ENCODE measurements at regions of chr5 and their contacts with region 1.

Region 1: DNA sequence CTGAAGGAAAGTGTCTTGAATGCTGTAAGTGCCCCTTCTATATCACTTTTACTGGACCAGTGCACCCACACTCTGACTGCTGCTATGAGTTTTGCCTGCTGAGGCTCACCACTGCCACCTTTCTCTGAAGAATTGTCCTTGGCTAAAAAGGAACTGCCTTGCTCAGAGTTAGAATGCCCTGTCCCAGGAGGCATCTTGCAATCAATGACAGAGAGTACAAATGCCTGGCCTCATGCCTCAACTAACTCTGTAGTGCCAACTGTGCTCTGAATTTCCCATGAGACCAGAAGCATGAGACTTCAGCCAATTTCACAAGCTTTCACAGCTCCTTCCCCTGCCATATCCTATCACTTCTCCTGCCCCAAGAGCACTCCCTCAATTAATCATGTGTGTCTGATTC is 569.7 kb downstream of the ZNF608 start:
- DNase-seq: peak; percentile 25
- H3K4me3 ChIP-seq: no peak overlapping the region
- H3K27ac ChIP-seq: no peak overlapping the region
- H3K4me1 ChIP-seq: no peaks in the 10 kb centered on the region
- CTCF ChIP-seq: peak; percentile 46; the same call in 1 of the 2 replicates

Region 2: DNA sequence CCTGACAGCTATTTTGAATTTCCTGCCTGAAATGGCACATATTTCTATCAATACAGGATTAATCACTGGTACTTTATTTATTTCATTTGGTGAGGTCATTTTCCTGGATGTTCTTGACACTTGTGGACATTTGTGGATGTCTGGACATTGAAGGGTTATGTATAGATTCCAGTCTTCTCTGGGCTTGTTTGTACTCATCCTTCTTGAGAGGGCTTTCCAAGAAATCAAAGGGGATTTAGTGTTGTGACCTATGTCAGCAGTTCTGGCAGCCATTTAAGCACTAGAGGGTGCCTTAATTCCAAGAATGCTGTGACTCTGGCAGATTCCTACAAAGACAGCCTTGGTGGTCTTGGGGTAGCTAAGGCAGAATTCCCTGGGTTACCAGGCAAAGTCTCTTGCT is 405.0 kb before region 1 on chr5:
- CTCF ChIA-PET with region 1: no interaction called
- POLR2A ChIA-PET with region 1: no interaction called
- intact Hi-C with region 1: no loop called
- DNase-seq: no peak
- H3K4me3 ChIP-seq: no peak overlapping the region
- H3K27ac ChIP-seq: no peak overlapping the region
- H3K4me1 ChIP-seq: no peaks in the 10 kb centered on the region
- CTCF ChIP-seq: no peak

Region 3: DNA sequence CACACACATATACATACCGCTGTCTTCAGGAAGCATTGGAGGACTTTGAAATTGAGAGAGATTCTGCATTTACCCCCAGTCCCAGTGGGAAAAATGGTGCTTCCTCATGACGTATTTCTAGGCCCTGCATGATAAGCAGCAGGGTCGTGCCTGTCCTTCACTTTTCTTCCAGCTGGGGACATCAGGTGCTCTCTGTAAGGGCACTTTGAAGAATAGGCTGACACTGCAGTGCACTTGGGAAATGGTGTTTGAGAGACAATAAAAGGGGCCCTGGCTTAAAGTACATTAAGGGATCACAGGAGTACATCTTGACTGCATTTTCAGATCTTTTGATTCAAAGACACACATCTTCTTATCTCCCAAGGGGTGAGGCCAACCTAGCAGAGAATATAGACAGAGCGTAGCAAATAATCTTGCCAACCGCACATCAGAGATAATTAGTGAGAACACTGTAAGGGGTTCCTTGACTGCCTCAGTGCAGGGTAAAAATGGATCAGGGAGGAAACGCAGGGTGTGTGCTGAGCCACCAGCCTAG is 226.8 kb before region 1 on chr5:
- CTCF ChIA-PET with region 1: no interaction called
- POLR2A ChIA-PET with region 1: no interaction called
- intact Hi-C with region 1: loop called (anchors 10 kb)
- DNase-seq: no peak
- H3K4me3 ChIP-seq: no peak overlapping the region
- H3K27ac ChIP-seq: no peak overlapping the region
- H3K4me1 ChIP-seq: no peaks in the 10 kb centered on the region
- CTCF ChIP-seq: no peak

Region 4: DNA sequence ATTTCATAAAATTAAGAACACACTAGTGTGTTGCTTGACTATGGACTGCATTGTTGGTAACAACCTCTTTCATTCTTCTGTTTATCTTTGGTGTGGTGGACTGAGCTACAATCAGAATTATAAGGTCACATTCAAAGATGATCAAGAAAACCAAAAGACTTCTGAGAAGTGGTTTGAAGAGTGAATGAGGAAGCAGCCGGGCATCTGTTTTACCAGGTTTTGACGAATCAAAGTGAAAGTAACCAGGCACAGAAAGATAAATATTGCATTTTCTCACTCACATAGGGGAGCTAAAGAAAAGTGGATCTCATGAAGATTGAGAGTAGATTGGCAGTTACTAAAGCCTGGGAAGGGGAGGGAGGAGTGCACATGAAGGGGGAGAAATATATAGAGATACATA is 19.4 kb before region 1 on chr5:
- CTCF ChIA-PET with region 1: interaction called, 11 read pairs
- POLR2A ChIA-PET with region 1: interaction called, 3 read pairs
- intact Hi-C with region 1: no loop called
- DNase-seq: peak; percentile 54
- H3K4me3 ChIP-seq: peak overlapping the region; percentile 51
- H3K27ac ChIP-seq: no peak overlapping the region
- H3K4me1 ChIP-seq: peaks cover 8% of the 10 kb centered on the region
- CTCF ChIP-seq: no peak

Region 5: DNA sequence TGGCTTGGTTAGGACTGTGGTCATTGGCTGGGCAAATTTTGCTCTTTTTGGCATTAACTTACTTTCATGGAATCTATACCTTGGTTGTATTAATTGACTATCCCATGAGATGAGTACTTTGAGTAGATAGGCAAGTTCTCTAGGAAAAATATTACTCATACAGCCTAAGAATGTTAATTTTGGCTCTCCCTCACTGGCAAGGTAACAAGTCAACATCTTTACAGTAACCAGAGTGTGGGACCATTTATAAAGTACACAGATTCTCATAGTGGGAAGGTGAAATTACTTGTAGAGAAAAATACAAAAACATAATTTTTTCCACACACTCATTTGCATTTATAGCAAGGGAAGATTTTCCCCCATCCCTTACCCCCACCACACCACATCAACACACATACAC is 724.4 kb after region 1 on chr5:
- CTCF ChIA-PET with region 1: no interaction called
- POLR2A ChIA-PET with region 1: no interaction called
- intact Hi-C with region 1: no loop called
- DNase-seq: no peak
- H3K4me3 ChIP-seq: no peak overlapping the region
- H3K27ac ChIP-seq: no peak overlapping the region
- H3K4me1 ChIP-seq: peaks cover 23% of the 10 kb centered on the region
- CTCF ChIP-seq: no peak